Activated CD8-positive, alpha-beta T cell treated with anti-CD3 and anti-CD28 coated beads, Interleukin-2, amount 10 ng/mL, durations not matched to agents 7 days and 5 days (primary cell): ENCODE measurements at regions of chr14 and their contacts with region 1.

Region 1: DNA sequence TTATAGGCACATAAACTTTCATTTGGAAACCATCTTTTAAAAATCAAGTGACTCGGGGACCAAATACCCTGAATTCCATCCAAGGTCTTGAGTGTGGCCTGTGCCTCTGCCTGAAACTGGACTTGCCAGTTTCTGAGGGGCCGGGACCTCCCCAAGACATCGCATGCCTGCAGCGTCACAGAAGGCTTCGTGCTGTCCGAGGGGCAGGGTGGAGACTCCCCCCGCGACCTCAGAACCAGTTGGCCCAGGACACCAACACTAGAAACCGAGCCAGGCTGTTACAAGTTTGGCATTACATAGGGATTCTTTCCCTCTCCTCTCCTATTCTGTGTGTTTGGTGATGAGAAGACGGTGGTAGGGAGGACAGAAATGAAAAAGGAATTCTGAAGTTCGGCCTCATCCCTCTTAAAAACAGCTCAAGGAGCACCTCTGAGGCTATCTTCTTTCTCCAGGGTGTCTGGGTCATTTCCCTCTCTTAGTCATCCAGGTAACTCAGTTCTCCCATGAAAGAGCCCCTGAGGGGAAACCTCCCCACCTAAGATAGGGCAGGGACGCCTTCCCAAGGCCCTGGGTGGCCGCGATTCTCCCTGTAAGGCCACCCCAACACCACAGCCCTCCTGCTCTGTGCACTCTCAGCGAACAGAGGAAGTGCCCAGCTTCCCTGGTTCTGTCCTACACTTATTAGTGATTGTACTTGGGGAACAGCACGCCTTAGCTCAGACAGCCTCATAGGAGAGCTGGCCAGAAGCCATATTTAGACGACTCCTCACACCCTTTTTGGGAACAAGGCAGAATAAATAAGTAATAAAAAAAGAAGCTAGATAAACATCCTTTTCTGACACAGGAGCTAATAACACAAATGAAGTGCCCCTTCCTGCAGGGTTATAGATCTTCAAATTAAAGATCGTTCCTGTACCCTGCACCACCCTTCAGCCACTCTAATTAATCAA is 93.8 kb downstream of the BCL11B start:
- DNase-seq: peak; percentile 19
- ATAC-seq: no peak
- H3K4me3 Mint-ChIP-seq: peak overlapping the region; percentile 58
- H3K27ac Mint-ChIP-seq: peak overlapping the region; percentile 82
- H3K4me1 Mint-ChIP-seq: peaks cover 64% of the 10 kb centered on the region
- H3K27me3 Mint-ChIP-seq: no peaks in the 10 kb centered on the region

Region 2: GRCh38 chr14:98994561-98994960 is 183.6 kb before region 1 on chr14:
- CTCF ChIA-PET with region 1: interaction called, 3 read pairs
- POLR2A ChIA-PET with region 1: interaction called, 10 read pairs
- DNase-seq: peak; percentile 37
- ATAC-seq: peak; percentile 76
- H3K4me3 Mint-ChIP-seq: peak overlapping the region; percentile 28
- H3K27ac Mint-ChIP-seq: peak overlapping the region; percentile 89
- H3K4me1 Mint-ChIP-seq: peaks cover 26% of the 10 kb centered on the region
- H3K27me3 Mint-ChIP-seq: no peaks in the 10 kb centered on the region

Region 3: GRCh38 chr14:99006276-99006675 is 171.9 kb before region 1 on chr14:
- CTCF ChIA-PET with region 1: no interaction called
- POLR2A ChIA-PET with region 1: no interaction called
- DNase-seq: no peak
- ATAC-seq: no peak
- H3K4me3 Mint-ChIP-seq: no peak overlapping the region
- H3K27ac Mint-ChIP-seq: no peak overlapping the region
- H3K4me1 Mint-ChIP-seq: peaks cover 9% of the 10 kb centered on the region
- H3K27me3 Mint-ChIP-seq: no peaks in the 10 kb centered on the region

Region 4: GRCh38 chr14:99192028-99192621 is 14.0 kb after region 1 on chr14:
- CTCF ChIA-PET with region 1: interaction called, 12 read pairs
- POLR2A ChIA-PET with region 1: interaction called, 4 read pairs
- DNase-seq: peak; percentile 56
- ATAC-seq: peak; percentile 20
- H3K4me3 Mint-ChIP-seq: peak overlapping the region; percentile 88
- H3K27ac Mint-ChIP-seq: peak overlapping the region; percentile 95
- H3K4me1 Mint-ChIP-seq: peaks cover 93% of the 10 kb centered on the region
- H3K27me3 Mint-ChIP-seq: no peaks in the 10 kb centered on the region